CD4-positive, alpha-beta T cell (primary cell): ENCODE measurements at regions of chr11 and their contacts with region 1.

Region 1: DNA sequence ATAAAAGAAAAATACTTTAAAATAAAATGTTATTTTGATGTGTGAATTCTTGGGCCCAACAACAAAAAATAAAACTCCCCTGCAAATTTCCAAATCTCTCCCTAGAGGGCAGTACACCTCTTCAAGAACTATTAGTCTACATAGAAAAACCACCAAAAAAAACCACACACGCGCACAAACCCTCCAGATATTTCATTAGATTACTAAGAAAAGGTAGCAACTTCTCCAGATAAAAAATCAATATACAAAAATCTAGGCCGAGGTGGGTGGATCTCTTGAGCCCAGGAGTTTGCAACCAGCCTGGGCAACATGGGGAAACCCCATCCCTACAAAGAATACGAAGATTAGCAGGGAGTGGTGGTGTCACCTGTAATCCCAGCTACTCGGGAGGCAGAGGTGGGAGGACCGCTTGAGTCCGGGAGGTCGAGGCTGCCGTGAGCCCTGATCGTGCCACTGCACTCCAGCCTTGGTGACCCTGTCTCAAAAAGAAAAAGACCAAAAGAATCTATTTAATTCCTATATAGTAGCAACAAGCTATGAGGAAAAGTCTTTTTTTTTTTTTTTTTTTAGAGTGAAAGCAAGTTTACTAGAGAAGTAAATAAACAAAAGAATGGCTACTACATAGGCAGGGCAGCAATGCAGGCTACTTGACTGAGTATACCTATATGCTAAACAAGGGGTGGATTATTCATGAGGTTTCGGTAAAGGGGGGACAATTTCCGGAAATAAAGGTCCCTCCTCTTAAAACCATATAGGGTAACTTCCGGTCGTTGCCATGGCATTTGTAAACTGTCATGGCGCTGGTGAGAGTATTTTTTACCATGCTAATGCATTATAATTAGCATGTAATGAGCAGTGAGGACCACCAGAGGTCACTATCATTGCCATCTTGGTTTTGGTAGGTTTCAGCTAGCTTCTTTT is 13.1 kb downstream of the B3GNT6 start:
- DNase-seq: peak; percentile 43 to 97 (median 72)
- ATAC-seq: peak; percentile 86
- H3K4me3 ChIP-seq: peak overlapping the region; percentile 56
- H3K4me3 Mint-ChIP-seq: peak overlapping the region; percentile 60
- H3K27ac ChIP-seq: peak overlapping the region in 1 of 2 donors; percentile 37
- H3K27ac Mint-ChIP-seq: peak overlapping the region; percentile 55
- H3K4me1 ChIP-seq: peaks cover 12% of the 10 kb centered on the region
- H3K4me1 Mint-ChIP-seq: peaks cover 10% of the 10 kb centered on the region
- H3K27me3 ChIP-seq: no peaks in the 10 kb centered on the region
- H3K27me3 Mint-ChIP-seq: peaks cover 15% of the 10 kb centered on the region
- CTCF ChIP-seq: peak; percentile 69

Region 2: GRCh38 chr11:76444384-76445123 is 602.7 kb before region 1 on chr11 and contains the start of gene EMSY:
- CTCF ChIA-PET with region 1: no interaction called
- POLR2A ChIA-PET with region 1: no interaction called
- intact Hi-C with region 1: loop called in 1 of 2 experiments (anchors 5 kb)
- DNase-seq: peak; percentile 82 to 98 (median 88)
- ATAC-seq: peak; percentile 91
- H3K4me3 ChIP-seq: peak within 1 kb of the TSS; percentile 78
- H3K4me3 Mint-ChIP-seq: peak within 1 kb of the TSS; percentile 94
- H3K27ac ChIP-seq: peak within 1 kb of the TSS; percentile 76 to 91
- H3K27ac Mint-ChIP-seq: peak within 1 kb of the TSS; percentile 95
- H3K4me1 ChIP-seq: peaks cover 22% of the 10 kb centered on the region
- H3K4me1 Mint-ChIP-seq: peaks cover 53% of the 10 kb centered on the region
- H3K27me3 ChIP-seq: no peaks in the 10 kb centered on the region
- H3K27me3 Mint-ChIP-seq: no peaks in the 10 kb centered on the region
- CTCF ChIP-seq: no peak
- total RNA-seq, gene EMSY: 20.9 to 21.8 TPM

Region 3: DNA sequence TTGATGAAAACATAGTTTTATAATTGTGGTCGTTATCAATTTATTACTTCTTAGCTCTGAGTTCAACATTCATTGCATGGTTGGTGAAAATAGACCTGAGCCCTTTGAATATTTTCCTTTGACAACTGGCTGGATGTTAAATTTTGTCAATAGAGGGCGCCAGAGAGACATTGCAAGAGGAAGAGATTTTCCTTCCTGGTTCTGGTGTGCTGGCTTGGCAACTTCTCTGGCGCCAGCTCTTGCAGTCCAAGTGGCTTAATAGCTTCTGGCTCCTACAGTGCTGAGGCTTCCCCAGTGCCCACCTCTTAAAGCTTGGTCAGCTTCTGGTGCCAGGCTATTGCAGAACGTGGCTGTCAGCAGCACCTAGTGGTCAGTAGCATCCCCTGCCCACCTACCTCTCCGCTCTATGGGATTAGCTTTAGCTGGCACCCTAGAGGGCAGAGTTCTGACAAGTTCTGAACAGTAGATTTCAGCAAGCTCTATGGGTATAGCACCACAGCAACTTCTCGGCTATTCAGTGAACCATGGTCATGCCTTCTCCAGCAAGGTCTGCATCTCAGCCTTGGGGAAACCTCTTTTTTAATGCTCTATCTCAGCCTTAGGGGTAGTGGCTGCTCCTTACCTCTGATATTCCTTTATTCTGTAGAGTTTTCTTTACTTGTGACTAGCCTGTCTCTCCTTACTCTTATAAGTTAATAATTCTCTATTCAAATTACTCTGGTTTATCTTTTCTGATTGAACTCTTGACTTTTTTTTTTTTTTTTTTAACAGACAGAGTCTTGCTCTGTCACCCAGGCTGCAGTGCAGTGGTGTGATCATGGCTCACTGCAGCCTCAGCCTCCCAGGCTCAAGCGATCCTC is 127.2 kb before region 1 on chr11:
- CTCF ChIA-PET with region 1: no interaction called
- POLR2A ChIA-PET with region 1: no interaction called
- intact Hi-C with region 1: loop called in 1 of 2 experiments (anchors 2 kb)
- DNase-seq: peak; percentile 7 to 85 (median 46)
- ATAC-seq: peak; percentile 80
- H3K4me3 ChIP-seq: peak overlapping the region; percentile 36
- H3K4me3 Mint-ChIP-seq: peak overlapping the region; percentile 72
- H3K27ac ChIP-seq: no peak overlapping the region
- H3K27ac Mint-ChIP-seq: no peak overlapping the region
- H3K4me1 ChIP-seq: peaks cover 5% of the 10 kb centered on the region
- H3K4me1 Mint-ChIP-seq: peaks cover 13% of the 10 kb centered on the region
- H3K27me3 ChIP-seq: no peaks in the 10 kb centered on the region
- H3K27me3 Mint-ChIP-seq: no peaks in the 10 kb centered on the region
- CTCF ChIP-seq: peak; percentile 78

Region 4: DNA sequence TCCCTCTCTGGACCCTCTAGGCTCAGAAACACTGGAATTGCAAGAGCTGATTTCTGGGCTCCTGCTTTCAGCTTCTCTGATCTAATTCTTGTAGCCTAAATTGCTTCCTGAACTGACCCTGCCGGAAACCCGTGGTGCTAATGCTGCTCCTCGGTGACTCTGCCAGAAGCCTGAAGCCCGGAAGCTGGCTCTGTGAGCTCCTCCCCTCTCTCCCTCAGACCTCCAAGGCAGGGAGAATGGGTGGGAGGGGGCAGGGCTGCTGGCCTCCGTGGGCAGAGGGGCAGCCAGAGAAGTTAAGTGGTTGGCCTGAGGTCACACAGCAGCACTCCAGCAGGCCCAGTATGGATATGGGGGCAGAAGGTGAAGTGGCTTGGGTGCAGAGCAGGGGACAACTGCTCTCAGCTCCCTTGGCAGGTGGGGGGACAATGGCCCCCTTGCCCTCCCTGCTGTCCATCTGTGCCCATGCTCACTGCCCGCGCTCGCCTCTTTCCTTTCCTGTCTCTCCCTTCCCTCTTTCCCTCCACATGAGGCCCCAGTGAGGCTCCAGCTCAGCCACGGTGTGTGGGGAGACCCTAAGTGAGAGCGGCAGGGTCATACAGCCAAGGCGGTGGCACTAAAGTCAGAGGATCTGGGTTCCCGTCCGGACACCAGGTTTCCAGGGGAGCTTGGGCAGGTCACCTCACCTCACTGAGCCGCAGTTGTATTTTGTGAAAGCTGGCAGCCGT is 35.7 kb after region 1 on chr11:
- CTCF ChIA-PET with region 1: interaction called, 3 read pairs
- POLR2A ChIA-PET with region 1: interaction called, 13 read pairs
- intact Hi-C with region 1: loop called in 1 of 2 experiments (anchors 2 kb)
- DNase-seq: peak in 12 of 14 experiments; percentile 21 to 74 (median 52)
- ATAC-seq: peak; percentile 95
- H3K4me3 ChIP-seq: peak overlapping the region; percentile 33
- H3K4me3 Mint-ChIP-seq: peak overlapping the region; percentile 72
- H3K27ac ChIP-seq: peak overlapping the region; percentile 47 to 65
- H3K27ac Mint-ChIP-seq: peak overlapping the region; percentile 96
- H3K4me1 ChIP-seq: peaks cover 26% of the 10 kb centered on the region
- H3K4me1 Mint-ChIP-seq: peaks cover 18% of the 10 kb centered on the region
- H3K27me3 ChIP-seq: no peaks in the 10 kb centered on the region
- H3K27me3 Mint-ChIP-seq: no peaks in the 10 kb centered on the region
- CTCF ChIP-seq: no peak

Region 5: GRCh38 chr11:77187776-77188632 is 140.7 kb after region 1 on chr11:
- CTCF ChIA-PET with region 1: interaction called, 4 read pairs
- POLR2A ChIA-PET with region 1: no interaction called
- intact Hi-C with region 1: loop called (anchors 2 to 5 kb)
- DNase-seq: peak; percentile 29 to 78 (median 49)
- ATAC-seq: peak; percentile 65
- H3K4me3 ChIP-seq: no peak overlapping the region
- H3K4me3 Mint-ChIP-seq: no peak overlapping the region
- H3K27ac ChIP-seq: no peak overlapping the region
- H3K27ac Mint-ChIP-seq: no peak overlapping the region
- H3K4me1 ChIP-seq: no peaks in the 10 kb centered on the region
- H3K4me1 Mint-ChIP-seq: no peaks in the 10 kb centered on the region
- H3K27me3 ChIP-seq: no peaks in the 10 kb centered on the region
- H3K27me3 Mint-ChIP-seq: no peaks in the 10 kb centered on the region
- CTCF ChIP-seq: peak; percentile 78

Region 6: GRCh38 chr11:77619576-77620198 is 572.4 kb after region 1 on chr11:
- CTCF ChIA-PET with region 1: no interaction called
- POLR2A ChIA-PET with region 1: no interaction called
- intact Hi-C with region 1: loop called in 1 of 2 experiments (anchors 5 kb)
- DNase-seq: peak in 4 of 14 experiments; percentile 16 to 67 (median 60)
- ATAC-seq: peak; percentile 41
- H3K4me3 ChIP-seq: no peak overlapping the region
- H3K4me3 Mint-ChIP-seq: no peak overlapping the region
- H3K27ac ChIP-seq: no peak overlapping the region
- H3K27ac Mint-ChIP-seq: no peak overlapping the region
- H3K4me1 ChIP-seq: no peaks in the 10 kb centered on the region
- H3K4me1 Mint-ChIP-seq: no peaks in the 10 kb centered on the region
- H3K27me3 ChIP-seq: no peaks in the 10 kb centered on the region
- H3K27me3 Mint-ChIP-seq: no peaks in the 10 kb centered on the region
- CTCF ChIP-seq: peak; percentile 82